ENCODE measurements at regions of chr3 and their contacts with region 1.

Region 1: DNA sequence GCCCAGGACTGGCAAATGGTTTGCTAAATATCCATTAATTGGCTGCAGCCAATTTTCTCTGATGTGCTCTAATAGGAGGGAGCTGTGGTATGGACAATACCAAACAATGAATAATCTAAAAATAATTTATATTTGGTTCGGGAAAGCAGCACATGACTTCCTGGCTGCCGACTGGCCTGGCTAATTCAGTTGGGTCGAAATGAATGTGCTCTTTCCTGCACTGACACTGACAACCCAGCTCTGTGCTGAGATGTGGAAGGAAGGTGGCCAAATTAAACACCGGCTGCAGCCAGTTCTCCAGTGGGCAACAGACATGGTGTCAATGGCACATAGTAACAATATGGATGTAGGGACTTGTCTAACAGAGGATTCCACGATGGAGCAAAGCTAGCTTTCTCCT is 21.1 kb upstream of the COLQ start:
- DNase-seq: no peak
- ATAC-seq: no peak
- H3K4me3 ChIP-seq: no peak overlapping the region
- H3K27ac ChIP-seq: no peak overlapping the region
- H3K4me1 ChIP-seq: no peaks in the 10 kb centered on the region
- CTCF ChIP-seq: no peak
- EP300 ChIP-seq: no peak
- POLR2A ChIP-seq: no peak
- RAD21 ChIP-seq: no peak

Region 2: DNA sequence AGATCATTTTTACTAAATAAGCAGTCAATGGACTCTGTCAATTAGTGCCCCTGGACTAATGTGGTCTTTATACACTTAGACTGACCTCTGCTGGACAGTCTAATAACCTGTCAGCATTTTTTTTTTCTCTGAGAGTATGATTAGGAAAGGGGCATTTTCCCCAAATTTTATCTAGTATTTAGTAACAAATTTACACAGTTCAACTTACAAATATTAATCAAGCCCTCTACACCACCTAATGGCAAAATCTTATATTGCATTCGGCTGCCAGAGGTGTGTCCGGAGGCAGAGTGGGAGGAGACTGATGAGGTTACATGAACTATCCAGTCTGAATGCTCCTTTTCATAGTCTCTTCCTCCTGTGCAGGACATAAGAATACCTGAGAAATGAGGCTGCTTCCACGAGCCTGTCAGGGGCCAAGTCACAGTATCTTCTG is 14.9 kb after region 1 on chr3:
- CTCF ChIA-PET with region 1: interaction called, 10 read pairs
- POLR2A ChIA-PET with region 1: no interaction called
- DNase-seq: peak; percentile 28 to 81
- ATAC-seq: peak; percentile 96 to 99
- H3K4me3 ChIP-seq: no peak overlapping the region
- H3K27ac ChIP-seq: 0 out of 6 replicates have a peak overlapping the region, but pooled peaks of 1 of the 2 experiments have one; percentile 38
- H3K4me1 ChIP-seq: peaks cover 6% of the 10 kb centered on the region; the same call in 1 of the 3 replicates
- CTCF ChIP-seq: peak; percentile 69
- EP300 ChIP-seq: no peak
- POLR2A ChIP-seq: no peak
- RAD21 ChIP-seq: peak; percentile 48 to 59

Region 3: DNA sequence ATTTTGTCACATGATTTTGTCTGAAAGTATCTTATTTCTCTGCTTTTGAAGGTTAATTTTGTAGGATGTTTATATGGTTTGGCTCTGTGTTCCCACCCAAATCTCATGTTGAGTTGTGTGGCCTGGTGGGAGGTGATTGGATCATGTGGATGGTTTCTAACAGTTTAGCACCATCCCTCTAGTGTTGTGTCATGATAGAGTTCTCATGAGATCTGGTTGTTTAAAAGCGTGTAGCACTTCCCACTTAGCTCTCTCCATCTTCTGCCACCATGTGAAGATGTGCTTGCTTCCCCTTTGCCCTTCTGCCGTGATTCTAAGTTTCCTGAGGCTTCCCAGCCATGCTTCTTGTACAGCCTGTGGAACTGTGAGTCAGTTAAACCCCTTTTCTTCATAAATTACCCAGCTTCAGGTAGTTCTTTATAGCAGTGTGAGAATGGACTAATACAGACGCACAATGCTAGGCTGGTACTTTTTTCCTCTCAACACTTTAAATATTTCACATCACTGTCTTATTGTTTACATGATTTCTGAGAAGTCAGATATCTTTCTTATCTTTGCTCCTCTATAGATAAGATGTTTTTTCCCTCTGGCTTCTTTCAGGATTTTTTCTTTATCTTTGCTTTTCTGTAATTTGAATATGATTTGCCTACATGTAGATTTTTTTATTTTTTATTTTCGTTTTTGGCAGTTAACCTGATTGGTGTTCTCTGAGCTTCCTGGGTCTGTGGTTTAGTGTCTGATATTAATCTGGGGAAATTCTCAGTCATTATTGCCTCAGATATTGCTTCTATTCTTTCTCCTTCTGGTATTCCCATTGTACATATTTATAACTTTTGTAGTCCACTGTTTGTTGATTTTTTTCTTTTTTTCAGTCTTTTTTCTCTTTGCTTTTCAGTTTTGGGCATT is 81.2 kb after region 1 on chr3:
- CTCF ChIA-PET with region 1: no interaction called
- POLR2A ChIA-PET with region 1: no interaction called
- DNase-seq: no peak
- ATAC-seq: no peak
- H3K4me3 ChIP-seq: no peak overlapping the region
- H3K27ac ChIP-seq: no peak overlapping the region
- H3K4me1 ChIP-seq: no peaks in the 10 kb centered on the region
- CTCF ChIP-seq: no peak
- EP300 ChIP-seq: no peak
- POLR2A ChIP-seq: no peak
- RAD21 ChIP-seq: no peak

Measured in A549 (cell line).